AG04449 (cell line): ENCODE measurements at regions of chr15 and their contacts with region 1.

Region 1: DNA sequence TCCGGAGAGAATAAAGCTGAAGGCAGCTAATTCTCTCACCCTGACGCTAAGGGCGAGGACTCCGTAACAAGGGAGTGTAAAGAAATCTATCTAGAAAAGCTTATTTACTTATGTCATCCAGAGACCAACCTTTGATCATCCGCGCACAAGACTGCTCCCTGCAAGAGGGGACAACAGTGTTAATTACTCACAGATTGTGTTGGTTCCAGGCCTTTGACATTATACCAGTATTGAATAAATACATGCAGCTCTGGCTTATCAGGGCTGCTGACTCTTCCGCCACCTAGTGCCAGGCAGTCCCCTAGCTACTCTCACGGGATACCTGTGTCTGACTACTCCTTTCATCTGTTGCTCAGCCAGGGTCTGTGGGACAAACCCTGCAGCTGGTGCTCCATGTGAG is 211.7 kb downstream of the DTWD1 start:
- DNase-seq: no peak
- H3K4me3 ChIP-seq: no peak overlapping the region
- CTCF ChIP-seq: peak; percentile 31

Region 2: GRCh38 chr15:49462232-49462844 is 370.2 kb before region 1 on chr15:
- CTCF ChIA-PET with region 1: no interaction called
- POLR2A ChIA-PET with region 1: no interaction called
- DNase-seq: no peak
- H3K4me3 ChIP-seq: no peak overlapping the region
- CTCF ChIP-seq: no peak

Region 3: GRCh38 chr15:49844390-49844789 is 11.9 kb after region 1 on chr15:
- CTCF ChIA-PET with region 1: interaction called, 14 read pairs
- POLR2A ChIA-PET with region 1: no interaction called
- DNase-seq: no peak
- H3K4me3 ChIP-seq: no peak overlapping the region
- CTCF ChIP-seq: no peak

Region 4: DNA sequence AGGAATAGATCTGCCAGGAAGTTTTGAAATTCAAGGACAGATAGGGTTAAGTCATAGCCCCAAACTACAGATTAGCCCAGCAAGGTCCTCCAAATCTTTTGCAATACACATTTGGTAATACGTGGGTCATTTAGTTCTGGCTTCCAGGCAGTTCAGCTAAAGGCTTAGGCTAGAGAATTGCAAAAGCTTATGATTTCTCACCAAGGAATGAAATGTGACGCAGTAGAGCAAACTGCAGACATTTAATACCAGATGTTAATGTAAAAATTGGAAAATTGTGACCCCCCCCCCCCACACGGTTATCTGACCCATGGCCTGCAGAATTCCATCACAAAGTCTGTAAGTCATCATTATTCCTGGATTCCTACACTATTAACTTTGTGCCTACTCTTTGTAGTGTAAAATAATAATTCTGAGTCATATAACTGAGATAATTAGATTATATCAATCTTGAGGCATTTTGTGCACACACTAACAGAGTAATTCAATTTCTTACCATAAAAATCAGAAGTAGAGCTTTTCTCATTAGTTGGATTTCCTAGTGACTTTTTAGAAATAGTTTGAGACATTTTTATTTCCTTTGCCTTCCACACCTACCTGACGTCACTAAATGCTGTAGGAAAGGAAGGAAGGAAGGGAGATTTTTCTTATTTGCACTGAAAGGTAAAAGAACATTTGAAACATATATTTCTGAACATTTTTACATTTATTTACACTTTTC is 23.6 kb after region 1 on chr15:
- CTCF ChIA-PET with region 1: interaction called, 3 read pairs
- POLR2A ChIA-PET with region 1: interaction called, 12 read pairs
- DNase-seq: peak; percentile 98
- H3K4me3 ChIP-seq: no peak overlapping the region
- CTCF ChIP-seq: no peak